ENCODE measurements at regions of chr15 and their contacts with region 1.

Region 1: GRCh38 chr15:29935276-29936020 is 113.2 kb upstream of the TJP1 start:
- DNase-seq: peak; percentile 59
- ATAC-seq: no peak
- H3K4me3 ChIP-seq: no peak overlapping the region
- H3K27ac ChIP-seq: peak overlapping the region; percentile 71
- H3K4me1 ChIP-seq: peaks cover 62% of the 10 kb centered on the region
- H3K27me3 ChIP-seq: no peaks in the 10 kb centered on the region
- CTCF ChIP-seq: peak; percentile 65

Region 2: GRCh38 chr15:29622637-29623036 is 312.8 kb before region 1 on chr15:
- CTCF ChIA-PET with region 1: no interaction called
- POLR2A ChIA-PET with region 1: no interaction called
- intact Hi-C with region 1: no loop called
- DNase-seq: no peak
- ATAC-seq: no peak
- H3K4me3 ChIP-seq: no peak overlapping the region
- H3K27ac ChIP-seq: no peak overlapping the region
- H3K4me1 ChIP-seq: no peaks in the 10 kb centered on the region
- H3K27me3 ChIP-seq: peaks cover 14% of the 10 kb centered on the region
- CTCF ChIP-seq: no peak

Region 3: DNA sequence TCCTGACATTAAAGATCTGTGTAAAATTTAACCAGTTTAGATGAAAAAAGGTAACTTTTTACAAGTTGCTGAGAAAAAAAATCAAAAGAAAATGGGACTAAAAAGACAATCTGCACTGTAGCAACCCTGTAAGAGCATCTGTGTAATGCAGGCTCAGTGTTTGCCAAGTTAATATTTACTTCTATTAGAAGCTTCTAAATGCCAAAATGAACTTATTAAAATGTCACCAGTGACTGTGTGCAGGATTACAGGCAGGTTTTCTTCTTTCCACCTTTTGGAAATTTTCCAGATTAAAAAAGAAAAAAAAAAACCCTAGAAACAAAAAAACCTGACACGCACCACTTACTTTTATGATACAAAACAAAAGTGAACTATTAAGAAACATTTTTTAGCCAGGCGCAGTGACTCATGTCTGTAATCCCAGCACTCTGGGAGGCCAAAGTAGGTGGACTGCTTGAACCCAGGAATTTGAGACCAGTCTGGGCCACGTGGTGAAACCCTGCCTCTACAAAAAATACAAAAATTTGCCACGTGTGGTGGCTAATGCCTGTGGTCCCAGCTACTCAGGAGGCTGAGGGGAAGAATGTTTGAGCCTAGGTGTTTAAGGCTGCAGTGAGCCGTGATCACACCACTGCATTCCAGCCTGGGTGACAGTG is 200.4 kb before region 1 on chr15:
- CTCF ChIA-PET with region 1: no interaction called
- POLR2A ChIA-PET with region 1: no interaction called
- intact Hi-C with region 1: loop called (anchors 1 kb)
- DNase-seq: peak; percentile 77
- ATAC-seq: peak; percentile 69
- H3K4me3 ChIP-seq: no peak overlapping the region
- H3K27ac ChIP-seq: peak overlapping the region; percentile 58
- H3K4me1 ChIP-seq: peaks cover 53% of the 10 kb centered on the region
- H3K27me3 ChIP-seq: no peaks in the 10 kb centered on the region
- CTCF ChIP-seq: no peak

Region 4: DNA sequence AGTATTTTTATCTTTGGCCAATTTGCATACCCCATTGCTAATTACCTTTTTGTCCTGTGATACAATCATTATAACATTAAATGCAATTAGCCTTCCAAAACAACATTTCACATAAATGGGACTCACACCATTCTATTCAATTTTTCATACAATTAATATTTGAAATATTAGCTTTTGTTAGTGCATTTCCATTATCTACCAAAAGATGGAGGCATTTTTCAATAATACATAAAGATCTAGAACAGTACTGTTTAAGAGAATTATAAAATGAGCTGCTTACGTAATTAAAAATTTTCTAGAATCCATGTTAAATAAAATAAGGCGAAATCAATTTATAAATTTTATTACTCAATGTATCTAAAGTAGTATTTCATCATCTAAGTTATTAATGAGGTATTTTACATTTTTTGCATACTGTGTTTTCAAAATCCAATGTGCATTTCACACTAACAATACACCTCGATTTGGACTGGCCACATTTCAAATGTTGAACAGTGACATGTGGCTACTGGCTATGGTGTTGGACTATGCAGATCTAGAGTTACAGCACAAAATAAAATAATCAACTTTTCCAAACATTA is 187.5 kb before region 1 on chr15:
- CTCF ChIA-PET with region 1: interaction called, 7 read pairs
- POLR2A ChIA-PET with region 1: no interaction called
- intact Hi-C with region 1: loop called (anchors 2 kb)
- DNase-seq: peak; percentile 64
- ATAC-seq: peak; percentile 42; the same call in 1 of the 2 replicates
- H3K4me3 ChIP-seq: no peak overlapping the region
- H3K27ac ChIP-seq: no peak overlapping the region
- H3K4me1 ChIP-seq: no peaks in the 10 kb centered on the region
- H3K27me3 ChIP-seq: no peaks in the 10 kb centered on the region
- CTCF ChIP-seq: peak; percentile 71

Region 5: DNA sequence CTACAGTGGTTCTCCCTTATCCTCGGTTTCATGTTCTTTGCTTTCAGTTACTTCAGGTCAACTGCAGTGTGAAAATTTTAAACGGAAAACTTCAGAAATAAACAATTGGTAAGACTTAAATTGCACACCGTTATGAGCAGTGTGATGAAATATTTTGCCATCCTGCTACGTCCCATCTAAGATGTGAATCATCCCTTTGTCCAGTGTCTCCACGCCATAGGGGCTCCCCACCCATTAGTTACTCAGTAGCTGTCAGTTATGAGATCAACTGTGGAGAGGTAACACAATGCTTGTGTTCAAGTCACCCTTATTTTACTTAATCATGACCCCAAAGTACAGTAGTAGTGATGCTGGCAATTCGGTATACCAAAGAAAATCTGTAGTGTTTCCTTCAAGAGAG is 160.5 kb before region 1 on chr15:
- CTCF ChIA-PET with region 1: no interaction called
- POLR2A ChIA-PET with region 1: no interaction called
- intact Hi-C with region 1: loop called (anchors 5 kb)
- DNase-seq: peak; percentile 54
- ATAC-seq: peak; percentile 39
- H3K4me3 ChIP-seq: no peak overlapping the region
- H3K27ac ChIP-seq: no peak overlapping the region
- H3K4me1 ChIP-seq: peaks cover 34% of the 10 kb centered on the region
- H3K27me3 ChIP-seq: no peaks in the 10 kb centered on the region
- CTCF ChIP-seq: no peak

Region 6: DNA sequence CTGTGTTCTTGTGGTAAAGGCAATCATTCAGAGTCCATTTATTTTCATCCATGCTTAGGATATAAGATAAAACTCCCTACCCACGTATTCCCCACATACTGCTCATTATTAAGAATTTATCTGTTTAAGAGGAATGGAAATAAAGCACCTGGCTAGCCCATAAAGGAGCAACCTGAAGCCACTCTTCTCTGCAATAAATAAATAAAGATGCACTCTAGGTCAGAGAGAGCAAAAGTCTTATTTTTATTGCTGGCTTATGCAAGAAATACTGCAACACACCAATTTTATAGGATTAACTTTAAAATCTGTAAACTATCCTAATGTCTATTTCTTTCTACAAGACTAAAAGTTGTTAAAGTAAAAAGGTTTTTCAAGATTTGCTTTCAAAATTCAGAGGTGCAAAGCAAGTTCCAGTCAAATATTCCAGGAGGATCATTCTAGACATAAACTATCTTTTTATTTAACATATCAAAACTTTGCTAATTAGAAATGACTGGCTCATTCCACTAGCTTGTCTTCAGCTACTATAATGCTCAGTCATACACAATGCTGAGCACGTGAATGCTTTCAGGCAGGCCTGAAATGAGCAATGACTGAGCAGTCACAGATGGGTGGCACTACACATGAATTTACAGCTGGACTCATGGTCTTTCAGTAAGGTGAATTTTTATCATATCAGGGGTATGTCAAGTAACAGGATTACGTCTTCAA is 120.3 kb before region 1 on chr15:
- CTCF ChIA-PET with region 1: interaction called, 3 read pairs
- POLR2A ChIA-PET with region 1: no interaction called
- intact Hi-C with region 1: loop called (anchors 1 kb)
- DNase-seq: peak; percentile 63
- ATAC-seq: peak; percentile 66
- H3K4me3 ChIP-seq: peak overlapping the region; percentile 32; the same call in 1 of the 2 replicates
- H3K27ac ChIP-seq: no peak overlapping the region
- H3K4me1 ChIP-seq: peaks cover 73% of the 10 kb centered on the region
- H3K27me3 ChIP-seq: no peaks in the 10 kb centered on the region
- CTCF ChIP-seq: no peak

Region 7: DNA sequence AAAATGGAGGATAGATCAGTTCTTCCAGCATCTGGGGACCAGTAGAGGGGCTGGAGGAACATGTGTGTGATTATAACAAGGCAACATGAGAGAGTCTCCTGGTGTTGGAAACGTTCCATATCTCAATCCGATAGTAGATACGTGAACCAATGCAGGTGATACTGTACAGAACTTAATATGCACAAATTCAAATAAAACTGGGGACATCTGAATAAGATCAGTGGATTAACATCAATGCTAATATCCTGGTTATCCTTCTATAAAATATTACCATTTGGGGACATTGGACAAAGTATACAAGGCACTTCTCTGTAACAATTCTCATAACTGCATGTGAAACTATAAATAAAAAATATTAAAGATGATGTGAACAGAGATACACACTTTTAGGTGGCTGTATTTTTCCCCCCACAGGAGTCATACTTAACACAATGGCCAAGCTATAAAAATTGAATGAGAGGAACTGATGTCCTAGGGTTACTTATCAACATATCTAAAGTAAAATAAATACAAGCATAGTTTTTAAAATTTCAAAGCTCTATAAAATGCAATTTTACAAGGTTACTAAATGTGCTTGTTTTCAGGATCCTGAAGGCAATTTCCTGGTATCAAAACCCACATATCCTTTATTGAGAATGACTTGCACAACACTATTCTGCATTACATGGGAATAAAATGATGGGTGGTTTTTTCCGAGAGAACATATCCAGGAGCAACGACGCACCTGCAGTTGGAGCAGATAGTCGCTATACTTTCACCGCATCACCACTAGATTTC is 82.0 kb before region 1 on chr15:
- CTCF ChIA-PET with region 1: no interaction called
- POLR2A ChIA-PET with region 1: no interaction called
- intact Hi-C with region 1: loop called (anchors 1 kb)
- DNase-seq: peak; percentile 68
- ATAC-seq: peak; percentile 45
- H3K4me3 ChIP-seq: no peak overlapping the region
- H3K27ac ChIP-seq: peak overlapping the region; percentile 76
- H3K4me1 ChIP-seq: peaks cover 63% of the 10 kb centered on the region
- H3K27me3 ChIP-seq: no peaks in the 10 kb centered on the region
- CTCF ChIP-seq: no peak

Region 8: DNA sequence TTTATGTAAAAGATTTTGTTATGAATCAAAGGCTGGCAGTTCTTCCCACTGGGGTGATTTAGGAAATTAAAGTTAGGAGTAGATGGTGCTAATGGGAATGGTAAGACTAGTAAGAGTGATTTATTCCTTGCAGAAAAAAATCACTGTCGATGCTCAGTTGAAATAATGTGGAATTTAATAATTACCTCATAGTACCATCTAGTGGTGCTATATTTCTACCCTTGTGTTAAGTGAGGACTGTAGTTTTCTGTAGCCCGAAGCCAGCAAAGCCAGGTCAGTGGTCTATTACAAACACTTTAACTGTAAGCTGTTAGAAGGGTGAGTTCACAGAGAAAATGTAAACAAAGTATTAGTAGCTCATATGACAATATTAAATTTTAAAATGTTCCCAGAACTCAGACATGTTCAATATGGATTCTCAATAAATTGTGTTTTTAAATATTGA is 107.8 kb after region 1 on chr15:
- CTCF ChIA-PET with region 1: no interaction called
- POLR2A ChIA-PET with region 1: no interaction called
- intact Hi-C with region 1: loop called (anchors 5 kb)
- DNase-seq: peak; percentile 62
- ATAC-seq: peak; percentile 75
- H3K4me3 ChIP-seq: no peak overlapping the region
- H3K27ac ChIP-seq: no peak overlapping the region
- H3K4me1 ChIP-seq: no peaks in the 10 kb centered on the region
- H3K27me3 ChIP-seq: no peaks in the 10 kb centered on the region
- CTCF ChIP-seq: peak; percentile 67

Measured in PC-3 (cell line).